ENCODE measurements at regions of chr17 and their contacts with region 1.

Region 1: GRCh38 chr17:7435221-7435675 is at the start of gene TMEM102:
- DNase-seq: peak; percentile 96 to 99 (median 98)
- H3K4me3 ChIP-seq: peak within 1 kb of the TSS in 3 of 4 donors; percentile 17 to 62 (median 40)
- H3K27ac ChIP-seq: peak within 1 kb of the TSS; percentile 78 to 94 (median 90)
- H3K4me1 ChIP-seq: peaks cover 37 to 41% of the 10 kb centered on the region in 2 donors
- H3K27me3 ChIP-seq: no peaks in the 10 kb centered on the region
- CTCF ChIP-seq: no peak
- POLR2A ChIP-seq: peak in 1 of 2 donors; percentile 18
- total RNA-seq, gene TMEM102: 5.7 to 26.6 (median 8.8) TPM

Region 2: GRCh38 chr17:7351665-7352501 is 83.4 kb before region 1 on chr17 and contains the start of gene KCTD11:
- intact Hi-C with region 1: loop called (anchors 2 to 5 kb)
- DNase-seq: peak; percentile 90 to 94 (median 92)
- H3K4me3 ChIP-seq: peak within 1 kb of the TSS in 3 of 4 donors; percentile 47 to 78 (median 68)
- H3K27ac ChIP-seq: peak within 1 kb of the TSS; percentile 95 to 99 (median 98)
- H3K4me1 ChIP-seq: peaks cover 21 to 39% of the 10 kb centered on the region in 2 donors
- H3K27me3 ChIP-seq: no peaks in the 10 kb centered on the region
- CTCF ChIP-seq: peak in 2 of 6 experiments; percentile 17 to 47
- POLR2A ChIP-seq: peak in 1 of 2 donors; percentile 82
- total RNA-seq, gene KCTD11: 6.8 to 13.8 (median 11.5) TPM

Region 3: DNA sequence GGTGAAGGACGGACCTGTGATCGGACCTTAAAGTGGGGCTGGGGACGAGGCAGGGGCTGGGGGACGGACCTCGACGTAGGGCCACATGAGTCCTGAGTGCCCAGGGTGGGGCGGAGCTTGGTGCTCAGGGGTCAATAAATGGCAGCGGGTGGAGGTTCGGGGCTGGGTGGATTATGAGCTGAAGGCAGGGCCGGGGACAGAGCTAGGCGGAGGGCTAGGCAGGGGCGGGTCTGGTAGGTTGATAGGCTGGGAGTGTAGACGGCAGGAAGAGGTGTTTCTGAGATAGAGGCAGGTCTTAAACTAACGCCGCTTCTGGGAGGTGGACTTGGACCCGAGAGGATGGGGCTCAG is 10.3 kb after region 1 on chr17:
- intact Hi-C with region 1: no loop called
- DNase-seq: no peak
- H3K4me3 ChIP-seq: peak overlapping the region in 2 of 4 donors; percentile 35 to 46
- H3K27ac ChIP-seq: peak overlapping the region; percentile 59 to 91 (median 86)
- H3K4me1 ChIP-seq: peaks cover 23 to 28% of the 10 kb centered on the region in 2 donors
- H3K27me3 ChIP-seq: no peaks in the 10 kb centered on the region
- CTCF ChIP-seq: no peak
- POLR2A ChIP-seq: no peak

Region 4: DNA sequence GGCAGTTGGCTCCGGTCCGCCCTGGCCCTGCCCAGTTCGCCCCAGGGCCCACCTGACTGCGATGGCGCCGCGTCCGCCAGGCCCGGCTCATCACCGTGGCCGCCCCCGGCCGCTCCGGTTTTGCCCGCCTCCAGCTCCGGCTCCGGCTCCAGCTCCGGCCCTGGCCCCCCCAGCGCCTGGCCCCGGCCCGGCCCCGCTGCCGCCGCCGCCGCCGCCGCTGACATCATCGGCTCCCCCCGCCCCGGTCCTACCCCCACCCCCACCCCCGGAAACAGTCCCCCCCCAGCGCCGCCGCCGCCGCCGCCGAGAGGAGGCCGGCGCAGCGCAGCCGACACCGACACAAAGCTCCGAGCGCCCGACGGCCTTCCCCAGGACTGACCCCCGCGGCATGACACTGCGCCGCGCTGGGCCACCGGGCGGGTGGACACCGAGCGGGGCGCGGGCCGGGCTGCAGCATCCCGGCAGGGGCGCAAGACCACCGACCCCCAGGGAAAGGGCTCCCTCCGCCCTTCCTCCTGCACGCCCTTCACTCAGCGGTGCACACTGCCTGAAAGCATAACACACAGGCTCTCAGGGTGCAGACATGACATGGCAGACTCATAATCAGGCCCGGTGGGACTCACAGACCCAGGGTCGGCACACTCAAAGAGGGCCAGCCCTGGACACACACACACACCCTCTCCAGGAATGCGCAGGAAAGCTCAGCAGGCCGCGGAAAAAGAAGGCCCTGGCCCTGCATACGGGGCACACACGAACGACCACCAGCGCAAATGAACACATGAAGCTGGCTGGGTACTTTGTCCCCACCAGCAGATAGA is 44.4 kb after region 1 on chr17 and contains the start of gene ZBTB4:
- intact Hi-C with region 1: loop called in 1 of 2 experiments (anchors 5 kb)
- DNase-seq: peak in 6 of 7 donors; percentile 53 to 77 (median 70)
- H3K4me3 ChIP-seq: peak within 1 kb of the TSS; percentile 76 to 99 (median 86)
- H3K27ac ChIP-seq: peak within 1 kb of the TSS; percentile 93 to 100 (median 99)
- H3K4me1 ChIP-seq: peaks cover 42 to 45% of the 10 kb centered on the region in 2 donors
- H3K27me3 ChIP-seq: no peaks in the 10 kb centered on the region
- CTCF ChIP-seq: peak in 1 of 6 experiments; percentile 0
- POLR2A ChIP-seq: peak; percentile 11 to 76
- total RNA-seq, gene ZBTB4: 16.6 to 111 (median 75.3) TPM

Region 5: GRCh38 chr17:7561028-7561575 is 125.9 kb after region 1 on chr17:
- intact Hi-C with region 1: loop called in 1 of 2 experiments (anchors 5 kb)
- DNase-seq: peak; percentile 90 to 97 (median 95)
- H3K4me3 ChIP-seq: peak overlapping the region; percentile 28 to 74 (median 57)
- H3K27ac ChIP-seq: peak overlapping the region; percentile 75 to 97 (median 92)
- H3K4me1 ChIP-seq: peaks cover 35 to 58% of the 10 kb centered on the region in 2 donors
- H3K27me3 ChIP-seq: no peaks in the 10 kb centered on the region
- CTCF ChIP-seq: peak; percentile 70 to 96 (median 92)
- POLR2A ChIP-seq: no peak

Region 6: GRCh38 chr17:7862692-7863437 is 427.6 kb after region 1 on chr17:
- intact Hi-C with region 1: no loop called
- DNase-seq: peak; percentile 45 to 74 (median 49)
- H3K4me3 ChIP-seq: no peak overlapping the region
- H3K27ac ChIP-seq: no peak overlapping the region
- H3K4me1 ChIP-seq: peaks cover 10 to 11% of the 10 kb centered on the region in 2 donors
- H3K27me3 ChIP-seq: no peaks in the 10 kb centered on the region
- CTCF ChIP-seq: peak; percentile 70 to 94 (median 79)
- POLR2A ChIP-seq: no peak